PC-3 (cell line): ENCODE measurements at regions of chr17 and their contacts with region 1.

Region 1: DNA sequence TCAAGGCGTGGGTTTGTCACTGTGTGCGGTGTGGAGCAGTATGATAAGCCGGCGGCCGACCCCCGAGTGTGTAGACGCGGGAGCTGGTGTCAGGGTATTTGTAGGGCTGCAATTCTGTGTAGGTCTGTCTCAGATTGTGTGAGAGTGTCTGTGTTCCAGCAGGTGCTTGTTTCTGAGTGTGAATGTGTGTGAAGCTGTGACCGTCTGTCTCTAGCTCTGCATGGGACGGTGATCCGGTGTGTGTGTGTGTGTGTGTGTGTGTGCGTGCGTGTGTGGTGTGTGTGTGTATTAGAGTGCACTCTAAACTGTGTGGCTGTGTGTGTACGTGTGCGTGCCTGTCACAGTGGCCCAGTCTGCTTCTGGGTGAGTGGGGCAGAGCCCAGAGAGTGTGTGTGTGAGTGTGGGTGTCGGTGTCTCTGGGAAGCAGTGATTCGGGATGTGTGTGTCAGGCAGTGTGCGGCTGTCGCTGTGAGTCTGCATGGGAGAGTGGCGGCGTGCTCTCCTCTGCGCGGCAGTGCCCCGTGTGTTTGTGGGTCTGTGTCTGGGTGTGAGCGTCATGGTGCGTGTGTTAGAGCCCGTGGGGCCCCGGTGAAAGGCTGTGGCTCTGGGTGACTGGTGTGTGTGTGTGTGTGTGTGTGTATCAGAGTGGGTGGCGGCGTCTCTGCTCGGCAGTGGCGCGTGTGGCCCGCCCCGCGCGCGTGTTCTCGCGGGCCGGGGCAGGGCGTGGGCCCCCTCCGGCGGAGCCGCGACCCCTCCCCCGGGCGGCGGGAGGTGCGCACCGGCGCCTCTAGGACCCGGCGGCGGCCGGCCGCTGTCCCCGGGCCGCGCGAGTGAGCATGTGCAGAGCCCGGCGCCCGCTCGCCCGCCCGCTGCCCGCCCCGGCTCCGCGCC is at the start of gene WSCD1:
- DNase-seq: peak; percentile 41
- ATAC-seq: peak; percentile 52
- H3K4me3 ChIP-seq: peak within 1 kb of the TSS; percentile 79
- H3K27ac ChIP-seq: peak within 1 kb of the TSS; percentile 56
- H3K4me1 ChIP-seq: peaks cover 31% of the 10 kb centered on the region
- H3K27me3 ChIP-seq: no peaks in the 10 kb centered on the region
- CTCF ChIP-seq: no peak
- total RNA-seq, gene WSCD1: 56.7 and 57.0 TPM in 2 replicates

Region 2: GRCh38 chr17:5715478-5715877 is 354.3 kb before region 1 on chr17:
- CTCF ChIA-PET with region 1: no interaction called
- POLR2A ChIA-PET with region 1: no interaction called
- intact Hi-C with region 1: loop called (anchors 10 kb)
- DNase-seq: no peak
- ATAC-seq: no peak
- H3K4me3 ChIP-seq: no peak overlapping the region
- H3K27ac ChIP-seq: no peak overlapping the region
- H3K4me1 ChIP-seq: peaks cover 21% of the 10 kb centered on the region
- H3K27me3 ChIP-seq: no peaks in the 10 kb centered on the region
- CTCF ChIP-seq: no peak

Region 3: DNA sequence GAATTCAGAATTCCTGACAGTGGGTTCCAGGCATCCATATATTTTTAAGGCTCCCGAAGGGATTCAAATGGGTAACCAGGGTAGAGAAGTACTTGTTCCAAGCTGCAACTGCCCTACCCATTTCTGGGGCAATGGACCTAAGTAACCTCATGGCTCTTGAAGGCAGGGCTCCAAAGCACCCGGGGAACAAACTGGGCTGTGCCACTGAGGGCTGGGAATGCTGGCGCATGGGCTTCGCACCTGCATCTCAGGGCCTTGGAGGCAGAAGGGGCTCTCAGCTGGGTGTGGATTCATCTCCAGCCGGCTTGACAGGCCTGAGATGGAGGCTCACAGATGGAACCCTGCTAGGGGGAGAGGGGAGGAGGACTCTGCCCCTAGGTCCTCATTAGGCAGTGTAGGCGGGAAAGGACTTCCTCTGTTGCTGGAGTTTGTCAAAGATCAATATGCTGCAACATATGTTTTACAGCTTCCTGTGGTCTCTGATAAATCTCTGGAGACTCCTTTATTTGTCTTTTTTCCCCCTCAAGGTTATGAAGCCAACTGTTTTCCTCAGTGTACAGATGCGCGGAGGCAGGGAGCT is 253.2 kb before region 1 on chr17:
- CTCF ChIA-PET with region 1: no interaction called
- POLR2A ChIA-PET with region 1: interaction called, 10 read pairs
- intact Hi-C with region 1: no loop called
- DNase-seq: no peak
- ATAC-seq: no peak
- H3K4me3 ChIP-seq: no peak overlapping the region
- H3K27ac ChIP-seq: no peak overlapping the region
- H3K4me1 ChIP-seq: peaks cover 14% of the 10 kb centered on the region
- H3K27me3 ChIP-seq: no peaks in the 10 kb centered on the region
- CTCF ChIP-seq: no peak

Region 4: DNA sequence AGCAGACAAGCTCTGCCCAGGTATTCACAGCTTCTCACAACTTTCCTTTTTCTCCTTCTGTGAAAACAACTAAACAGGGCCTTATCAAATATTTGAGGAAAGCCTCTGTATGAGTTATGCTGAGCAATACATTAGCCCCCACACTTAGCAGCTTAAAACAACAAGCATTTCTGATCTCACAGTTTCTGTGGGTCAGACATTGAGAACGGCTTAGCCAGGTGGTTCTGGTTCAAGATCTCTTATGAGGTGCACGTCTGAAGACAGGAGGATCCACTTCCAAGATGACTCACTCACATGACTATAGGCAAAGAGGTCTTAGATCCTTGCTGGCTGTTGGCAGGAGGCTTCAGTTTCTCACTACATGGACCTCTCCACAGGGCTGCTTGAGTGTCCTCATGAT is 181.0 kb before region 1 on chr17:
- CTCF ChIA-PET with region 1: no interaction called
- POLR2A ChIA-PET with region 1: no interaction called
- intact Hi-C with region 1: loop called (anchors 10 kb)
- DNase-seq: peak; percentile 66
- ATAC-seq: no peak
- H3K4me3 ChIP-seq: no peak overlapping the region
- H3K27ac ChIP-seq: peak overlapping the region; percentile 91
- H3K4me1 ChIP-seq: peaks cover 20% of the 10 kb centered on the region
- H3K27me3 ChIP-seq: no peaks in the 10 kb centered on the region
- CTCF ChIP-seq: no peak

Region 5: DNA sequence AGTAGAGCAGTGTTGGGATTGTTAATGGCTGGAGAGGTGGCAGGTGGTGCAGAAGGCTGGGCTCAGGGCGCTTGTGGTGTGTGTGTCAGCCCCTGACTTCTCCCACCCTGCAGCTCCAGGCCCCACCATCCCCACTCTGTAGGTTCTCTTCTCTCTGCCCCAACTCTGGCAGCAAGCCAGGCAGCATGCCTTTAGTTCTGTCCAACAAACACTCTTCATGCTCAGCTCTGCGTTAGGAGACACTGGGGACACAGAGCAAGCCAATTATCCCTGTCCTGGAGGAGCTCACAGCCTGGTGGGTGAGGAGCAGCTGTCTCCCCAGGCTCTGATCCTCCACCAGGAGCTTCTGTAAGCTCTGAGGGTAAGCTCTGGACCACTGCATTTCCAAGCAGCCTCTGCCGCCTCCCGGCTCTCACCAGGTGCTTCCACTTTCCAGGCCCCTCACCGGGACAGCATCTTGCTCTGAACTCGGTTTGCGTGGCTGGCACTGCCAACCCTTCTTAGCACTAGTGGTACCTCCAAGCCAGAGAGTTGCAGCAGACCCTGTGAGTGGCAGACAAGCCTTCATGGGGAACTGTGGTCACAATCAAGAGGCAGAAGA is 33.9 kb before region 1 on chr17:
- CTCF ChIA-PET with region 1: no interaction called
- POLR2A ChIA-PET with region 1: no interaction called
- intact Hi-C with region 1: no loop called
- DNase-seq: no peak
- ATAC-seq: no peak
- H3K4me3 ChIP-seq: no peak overlapping the region
- H3K27ac ChIP-seq: no peak overlapping the region
- H3K4me1 ChIP-seq: no peaks in the 10 kb centered on the region
- H3K27me3 ChIP-seq: no peaks in the 10 kb centered on the region
- CTCF ChIP-seq: no peak

Region 6: DNA sequence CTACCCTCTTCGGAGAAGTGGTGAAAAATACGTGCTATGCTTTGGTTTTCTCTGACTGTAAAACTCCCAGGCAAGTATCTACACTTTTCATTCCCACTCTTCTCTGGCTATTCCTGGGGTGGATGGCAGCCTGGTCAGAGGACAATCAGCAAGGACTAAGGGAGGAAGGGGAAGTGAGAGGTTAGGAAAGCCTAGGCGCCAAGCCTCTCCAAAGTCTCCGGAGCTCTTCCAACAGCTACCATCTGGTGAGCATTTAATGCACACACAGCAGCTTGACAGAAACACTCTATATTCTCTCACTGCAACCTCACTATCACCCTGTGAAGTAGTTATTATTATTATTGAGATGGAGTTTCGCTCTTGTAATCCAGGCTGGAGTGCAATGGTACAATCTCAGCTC is 65.5 kb after region 1 on chr17:
- CTCF ChIA-PET with region 1: no interaction called
- POLR2A ChIA-PET with region 1: no interaction called
- intact Hi-C with region 1: no loop called
- DNase-seq: no peak
- ATAC-seq: no peak
- H3K4me3 ChIP-seq: no peak overlapping the region
- H3K27ac ChIP-seq: no peak overlapping the region
- H3K4me1 ChIP-seq: no peaks in the 10 kb centered on the region
- H3K27me3 ChIP-seq: no peaks in the 10 kb centered on the region
- CTCF ChIP-seq: no peak